ENCODE measurements at regions of chr5 and their contacts with region 1.

Region 1: DNA sequence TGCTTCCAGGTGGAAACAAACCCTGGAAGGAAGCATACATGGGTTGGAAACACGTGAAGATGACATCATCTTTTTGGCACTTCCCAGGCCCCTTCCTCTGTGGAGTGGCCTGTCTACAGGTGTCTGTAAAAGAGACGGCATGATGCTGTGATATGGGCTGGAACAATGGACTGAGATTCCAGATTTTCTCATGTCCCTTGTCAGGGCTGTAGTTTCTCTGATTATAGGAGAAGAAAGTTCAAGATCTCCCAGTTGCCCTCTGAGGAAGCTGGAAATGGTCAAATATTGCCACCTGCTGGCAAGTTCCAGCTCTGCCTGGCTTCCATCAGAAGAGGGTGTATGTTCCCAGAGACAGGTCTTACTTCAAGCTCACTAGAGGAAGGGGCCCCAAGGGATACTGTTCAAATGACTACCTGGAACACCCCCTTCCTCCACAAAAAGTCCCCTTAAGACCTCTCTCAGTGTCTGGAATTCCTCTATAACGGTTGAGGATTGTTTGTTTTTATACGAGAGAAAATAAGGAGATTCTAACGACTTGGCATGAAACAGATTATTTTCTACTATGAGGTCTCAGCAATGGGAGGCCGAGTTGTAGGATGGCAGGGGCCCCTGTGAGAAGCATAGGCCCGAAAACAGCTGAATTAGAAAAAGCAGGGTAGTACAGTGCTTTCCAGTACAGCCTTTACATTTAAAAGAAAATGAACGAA is 7.3 kb upstream of the ANXA6 start:
- DNase-seq: peak; percentile 69 to 79 (median 74)
- H3K4me3 ChIP-seq: no peak overlapping the region
- H3K4me3 Mint-ChIP-seq: no peak overlapping the region
- H3K27ac ChIP-seq: no peak overlapping the region
- H3K27ac Mint-ChIP-seq: peak overlapping the region in 1 of 7 donors; percentile 44
- H3K4me1 ChIP-seq: peaks cover 7 to 13% of the 10 kb centered on the region in 2 donors
- H3K4me1 Mint-ChIP-seq: peaks cover 15% of the 10 kb centered on the region
- H3K27me3 ChIP-seq: no peaks in the 10 kb centered on the region
- H3K27me3 Mint-ChIP-seq: peaks cover 0 to 2% (median 0%) of the 10 kb centered on the region in 3 donors
- CTCF ChIP-seq: peak; percentile 91

Region 2: DNA sequence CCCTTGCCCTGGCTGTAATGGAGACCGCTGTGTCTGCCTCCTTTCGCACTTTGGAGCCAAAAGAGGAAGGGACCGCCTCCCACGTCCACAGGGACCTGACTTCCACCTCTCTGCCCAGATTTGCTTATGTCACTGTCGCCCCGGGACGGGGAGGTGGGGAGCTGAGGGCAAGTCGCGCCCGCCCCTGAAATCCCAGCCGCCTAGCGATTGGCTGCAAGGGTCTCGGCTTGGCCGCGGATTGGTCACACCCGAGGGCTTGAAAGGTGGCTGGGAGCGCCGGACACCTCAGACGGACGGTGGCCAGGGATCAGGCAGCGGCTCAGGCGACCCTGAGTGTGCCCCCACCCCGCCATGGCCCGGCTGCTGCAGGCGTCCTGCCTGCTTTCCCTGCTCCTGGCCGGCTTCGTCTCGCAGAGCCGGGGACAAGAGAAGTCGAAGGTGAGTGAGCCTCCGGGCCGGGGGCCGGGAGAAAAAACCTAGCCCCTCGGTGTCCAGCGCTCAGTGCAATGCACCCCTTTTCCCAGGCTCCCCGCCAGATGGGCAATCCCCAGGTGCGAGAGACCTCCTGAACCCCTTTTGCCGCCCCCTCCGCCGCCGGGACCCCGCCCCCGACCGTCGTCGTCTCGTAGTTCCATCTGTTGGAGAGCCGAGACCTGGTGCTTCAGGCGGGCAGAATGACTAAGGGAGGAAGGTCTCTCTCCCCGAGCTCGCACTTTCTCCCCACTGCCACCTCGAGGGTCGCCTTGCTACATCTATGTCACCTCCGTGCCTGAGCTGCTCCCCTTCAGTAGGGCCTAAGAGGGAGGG is 144.3 kb before region 1 on chr5 and contains the start of gene GPX3:
- intact Hi-C with region 1: no loop called
- DNase-seq: peak; percentile 79 to 91 (median 83)
- H3K4me3 ChIP-seq: peak within 1 kb of the TSS; percentile 54 to 79 (median 55)
- H3K4me3 Mint-ChIP-seq: peak within 1 kb of the TSS; percentile 77 to 84
- H3K27ac ChIP-seq: peak within 1 kb of the TSS in 1 of 2 donors; percentile 60
- H3K27ac Mint-ChIP-seq: peak within 1 kb of the TSS in 6 of 7 donors; percentile 23 to 80 (median 50)
- H3K4me1 ChIP-seq: peaks cover 63 to 66% of the 10 kb centered on the region in 2 donors
- H3K4me1 Mint-ChIP-seq: peaks cover 67% of the 10 kb centered on the region
- H3K27me3 ChIP-seq: no peaks in the 10 kb centered on the region
- H3K27me3 Mint-ChIP-seq: peaks cover 4 to 9% (median 6%) of the 10 kb centered on the region in 3 donors
- CTCF ChIP-seq: no peak
- polyA plus RNA-seq, gene GPX3: 3.5 to 12.7 (median 3.8) TPM

Region 3: GRCh38 chr5:151126199-151126645 is 38.6 kb before region 1 on chr5:
- intact Hi-C with region 1: loop called (anchors 1 to 2 kb)
- DNase-seq: peak; percentile 70 to 77 (median 71)
- H3K4me3 ChIP-seq: peak overlapping the region in 1 of 3 experiments; percentile 35
- H3K4me3 Mint-ChIP-seq: peak overlapping the region in 1 of 2 donors; percentile 18
- H3K27ac ChIP-seq: peak overlapping the region; percentile 50 to 65
- H3K27ac Mint-ChIP-seq: peak overlapping the region; percentile 87 to 96 (median 91)
- H3K4me1 ChIP-seq: peaks cover 27 to 32% of the 10 kb centered on the region in 2 donors
- H3K4me1 Mint-ChIP-seq: peaks cover 36% of the 10 kb centered on the region
- H3K27me3 ChIP-seq: no peaks in the 10 kb centered on the region
- H3K27me3 Mint-ChIP-seq: no peaks in the 10 kb centered on the region
- CTCF ChIP-seq: peak; percentile 87